ENCODE measurements at regions of chr19 and their contacts with region 1.

Region 1: DNA sequence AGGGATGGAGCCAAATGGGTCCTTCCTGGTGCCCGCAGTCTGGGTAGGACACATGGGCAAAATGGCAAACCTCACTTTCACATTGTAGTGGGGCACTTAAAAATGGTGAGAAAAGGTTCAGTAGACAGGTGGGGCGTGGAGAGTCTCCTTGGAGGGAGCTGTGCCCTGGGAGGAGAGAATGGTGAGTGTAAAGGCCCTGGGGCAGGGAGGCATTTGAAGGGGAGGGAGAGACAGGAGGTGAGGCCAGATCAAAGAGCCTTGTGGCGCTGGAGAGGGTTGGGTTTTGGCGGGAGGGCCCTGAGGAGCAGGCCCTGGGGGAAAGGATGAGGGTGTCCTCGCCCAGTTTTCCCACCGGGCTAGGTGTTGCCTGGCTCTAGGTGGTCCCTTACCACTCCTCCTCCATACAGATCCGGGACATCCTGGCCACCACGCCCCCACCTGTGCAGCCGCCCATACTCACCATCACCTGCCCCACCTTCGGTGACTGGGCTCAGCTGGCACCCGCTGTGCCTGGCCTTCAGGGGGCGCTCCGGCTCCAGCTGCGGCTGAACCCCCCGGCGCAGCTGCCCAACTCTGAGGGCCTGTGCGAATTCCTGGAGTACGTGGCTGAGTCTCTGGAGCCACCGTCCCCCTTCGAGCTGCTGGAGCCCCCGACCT is 6.3 kb downstream of the MAP1S start:
- DNase-seq: no peak
- H3K4me3 Mint-ChIP-seq: no peak overlapping the region
- H3K27ac Mint-ChIP-seq: no peak overlapping the region
- H3K4me1 Mint-ChIP-seq: peaks cover 24% of the 10 kb centered on the region
- H3K27me3 Mint-ChIP-seq: no peaks in the 10 kb centered on the region

Region 2: DNA sequence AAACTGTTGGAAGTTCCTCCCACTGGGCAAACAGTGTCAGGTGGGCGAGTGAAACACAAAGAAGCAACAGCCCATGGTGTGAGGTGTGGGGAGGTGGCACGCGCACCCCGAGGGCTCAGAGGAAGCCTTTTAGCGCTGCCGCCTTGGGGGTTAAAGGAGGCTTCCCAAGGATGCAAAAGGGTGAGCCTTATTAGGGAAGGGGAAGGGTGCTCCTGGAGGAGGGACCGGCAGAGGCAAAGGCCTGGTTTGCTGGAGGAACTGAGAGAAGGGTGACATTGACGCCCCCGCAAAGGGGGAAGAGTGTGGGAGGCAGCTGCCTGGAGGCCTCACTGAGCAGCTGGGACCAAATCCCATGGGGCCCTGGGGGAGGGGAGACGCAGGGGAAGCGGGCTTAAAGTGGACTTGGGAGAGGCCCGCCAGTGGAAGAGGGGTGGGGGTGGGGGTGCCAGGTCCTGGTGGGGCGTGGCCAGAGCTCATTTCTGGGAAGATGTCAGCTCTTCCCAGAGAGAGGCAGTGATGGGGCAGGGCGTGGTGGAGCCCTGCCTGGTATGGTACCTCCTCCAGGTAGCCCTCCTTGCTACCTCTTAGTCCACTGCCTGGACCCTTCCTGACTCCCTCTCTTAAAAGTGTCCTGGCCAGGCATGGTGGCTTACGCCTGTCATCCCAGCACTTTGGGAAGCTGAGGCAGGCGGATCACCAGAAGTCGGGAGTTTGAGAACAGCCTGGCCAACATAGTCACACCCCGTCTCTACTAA is 13.7 kb after region 1 on chr19:
- CTCF ChIA-PET with region 1: interaction called, 20 read pairs
- POLR2A ChIA-PET with region 1: no interaction called
- DNase-seq: no peak
- H3K4me3 Mint-ChIP-seq: no peak overlapping the region
- H3K27ac Mint-ChIP-seq: no peak overlapping the region
- H3K4me1 Mint-ChIP-seq: peaks cover 18% of the 10 kb centered on the region
- H3K27me3 Mint-ChIP-seq: no peaks in the 10 kb centered on the region